RWPE1 (cell line): ENCODE measurements at regions of chr22 and their contacts with region 1.

Region 1: DNA sequence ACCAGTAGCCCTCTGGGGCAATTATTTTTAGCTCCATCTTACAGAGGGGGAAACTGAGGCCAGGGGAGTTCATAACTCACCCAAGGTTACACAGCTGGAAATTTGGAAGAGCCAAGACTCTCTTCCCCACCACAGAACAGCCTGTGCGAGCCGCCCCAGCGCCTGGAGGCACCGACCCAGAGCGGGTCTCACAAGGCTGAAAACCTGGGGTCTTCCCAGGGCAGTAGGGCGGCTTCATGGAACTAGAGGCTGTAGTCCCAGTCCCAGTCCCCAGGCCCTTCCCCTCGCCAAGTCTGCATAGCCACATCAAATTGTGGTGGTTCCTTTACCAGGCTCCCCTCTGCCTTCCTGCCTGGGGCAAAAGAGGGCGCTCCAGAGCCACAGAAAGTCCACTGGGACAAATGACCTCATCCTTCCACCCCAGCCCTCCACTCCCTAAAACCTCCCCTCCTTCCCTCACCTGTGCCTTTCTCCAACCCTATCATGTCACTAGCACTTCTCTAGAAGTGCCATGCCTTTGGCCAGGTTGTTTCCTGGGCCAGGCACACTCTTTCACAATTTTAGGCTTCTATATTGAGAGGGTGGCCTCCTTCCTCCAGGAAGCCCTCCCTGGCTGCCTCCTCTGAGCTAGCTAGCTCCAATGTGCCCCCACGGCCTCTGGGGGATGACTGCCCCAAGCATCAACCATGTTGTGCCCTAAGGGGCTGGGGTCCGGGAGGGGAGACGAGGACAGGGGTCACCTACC is 15.2 kb upstream of the CDC42EP1 start:
- DNase-seq: no peak
- H3K27ac ChIP-seq: peak overlapping the region; percentile 97
- CTCF ChIP-seq: peak; percentile 67

Region 2: DNA sequence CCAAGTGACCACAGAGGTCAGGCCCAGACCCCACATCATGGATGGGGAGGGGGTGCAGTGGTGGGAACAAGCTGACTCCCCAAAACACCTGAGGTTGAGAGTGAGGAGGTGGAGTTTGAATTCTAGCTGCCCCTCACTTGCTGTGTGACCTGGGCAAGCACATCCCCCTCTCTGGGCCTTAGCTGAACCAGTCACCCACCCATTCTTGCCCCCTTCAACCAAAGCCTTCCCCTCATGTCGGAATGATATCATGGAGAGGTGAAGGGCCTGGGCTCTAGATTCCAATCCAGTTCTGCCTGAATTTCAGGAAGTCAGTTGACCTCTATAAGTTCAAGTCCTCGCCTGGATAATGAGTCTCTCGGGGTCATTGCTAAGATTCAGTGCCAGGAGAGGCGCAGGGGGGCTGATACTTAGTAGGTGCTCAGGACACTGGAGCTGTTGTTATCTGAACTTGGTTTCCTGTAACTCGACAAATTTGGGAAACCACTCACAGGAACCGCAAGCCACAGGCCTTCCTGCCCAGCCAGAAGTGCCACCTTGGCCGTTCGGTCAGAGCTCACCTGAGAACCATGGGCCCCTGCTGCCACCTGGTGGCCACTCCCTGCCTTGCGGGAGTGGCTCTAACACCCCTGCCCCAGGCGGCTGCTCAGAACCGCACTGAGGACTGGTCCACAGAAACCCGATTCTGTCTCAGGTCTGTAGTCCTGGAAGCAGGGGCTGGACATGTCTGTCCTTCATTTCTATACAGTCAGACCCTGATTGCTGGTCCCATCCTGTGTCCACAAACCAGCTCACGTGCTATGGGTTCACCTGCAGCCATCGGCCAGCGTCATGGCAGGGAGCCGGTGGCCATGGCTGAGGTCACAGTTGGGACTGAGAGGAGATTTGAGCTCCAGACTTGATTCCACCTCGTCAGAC is 22.0 kb after region 1 on chr22:
- CTCF ChIA-PET with region 1: interaction called, 38 read pairs
- POLR2A ChIA-PET with region 1: interaction called, 4 read pairs
- DNase-seq: no peak
- H3K27ac ChIP-seq: peak overlapping the region; percentile 66
- CTCF ChIP-seq: peak; percentile 90